MCF 10A (cell line): ENCODE measurements at regions of chr13 and their contacts with region 1.

Region 1: DNA sequence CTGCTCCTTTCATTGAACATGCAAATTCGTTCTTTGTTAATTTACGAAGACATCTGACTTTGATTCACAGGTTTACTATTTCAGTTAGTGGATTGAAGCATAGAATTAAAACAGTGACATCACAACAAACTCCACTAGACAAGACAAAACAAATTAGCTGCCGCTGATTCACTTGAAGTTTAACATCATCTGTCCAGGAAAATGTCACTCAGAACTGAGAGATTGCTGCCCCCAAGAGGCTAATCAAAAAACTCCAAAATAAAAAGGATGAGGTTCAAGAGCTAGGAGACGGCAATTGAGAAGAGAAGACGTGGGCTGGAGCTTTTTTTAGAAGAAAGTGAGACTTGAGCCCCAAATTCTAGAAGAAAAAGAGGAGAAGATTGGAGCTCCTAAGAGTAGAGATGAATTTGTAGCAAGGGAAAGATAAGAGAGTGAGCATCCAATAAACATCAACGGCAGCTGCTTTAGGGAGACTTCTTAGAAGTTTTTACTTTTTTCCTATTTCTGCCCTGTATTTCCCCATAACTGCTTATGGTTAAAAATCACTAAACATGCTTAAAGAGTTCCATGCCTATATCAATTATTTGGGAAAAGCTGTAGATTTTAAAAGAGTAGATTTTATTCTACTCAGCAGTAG is 40.8 kb upstream of the TPP2 start:
- DNase-seq: peak; percentile 75
- H3K4me3 Mint-ChIP-seq: no peak overlapping the region
- H3K27ac Mint-ChIP-seq: no peak overlapping the region
- H3K4me1 Mint-ChIP-seq: peaks cover 6% of the 10 kb centered on the region
- H3K27me3 Mint-ChIP-seq: no peaks in the 10 kb centered on the region
- CTCF ChIP-seq: peak; percentile 48

Region 2: GRCh38 chr13:101795025-101795424 is 761.0 kb before region 1 on chr13:
- CTCF ChIA-PET with region 1: no interaction called
- POLR2A ChIA-PET with region 1: no interaction called
- intact Hi-C with region 1: loop called (anchors 10 kb)
- DNase-seq: peak; percentile 9
- H3K4me3 Mint-ChIP-seq: no peak overlapping the region
- H3K27ac Mint-ChIP-seq: no peak overlapping the region
- H3K4me1 Mint-ChIP-seq: no peaks in the 10 kb centered on the region
- H3K27me3 Mint-ChIP-seq: peaks cover 80% of the 10 kb centered on the region
- CTCF ChIP-seq: no peak

Region 3: DNA sequence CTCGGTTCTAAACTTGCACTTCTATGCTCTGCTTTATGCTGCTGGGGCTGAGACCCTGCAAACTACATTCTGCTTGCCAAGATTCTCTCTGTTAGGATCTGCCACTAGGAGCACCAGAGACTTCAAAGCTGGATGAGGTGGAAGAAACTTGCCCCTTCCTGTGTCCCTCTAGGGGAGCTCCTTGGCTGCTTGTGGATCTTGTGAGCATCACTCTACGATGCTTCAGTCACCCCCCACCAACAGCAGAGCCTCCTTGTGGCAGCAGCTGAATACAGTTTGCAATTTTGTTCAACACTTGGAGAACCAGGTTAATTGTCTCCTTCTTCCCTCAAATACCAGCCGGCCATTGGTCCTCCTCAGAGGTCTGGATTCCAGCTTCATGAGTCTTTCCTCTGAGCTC is 464.8 kb before region 1 on chr13:
- CTCF ChIA-PET with region 1: interaction called, 21 read pairs
- POLR2A ChIA-PET with region 1: no interaction called
- intact Hi-C with region 1: loop called (anchors 5 kb)
- DNase-seq: peak; percentile 18
- H3K4me3 Mint-ChIP-seq: no peak overlapping the region
- H3K27ac Mint-ChIP-seq: no peak overlapping the region
- H3K4me1 Mint-ChIP-seq: peaks cover 8% of the 10 kb centered on the region
- H3K27me3 Mint-ChIP-seq: no peaks in the 10 kb centered on the region
- CTCF ChIP-seq: no peak

Region 4: GRCh38 chr13:102191951-102192471 is 364.0 kb before region 1 on chr13:
- CTCF ChIA-PET with region 1: interaction called, 24 read pairs
- POLR2A ChIA-PET with region 1: no interaction called
- intact Hi-C with region 1: loop called (anchors 1 kb)
- DNase-seq: peak; percentile 3
- H3K4me3 Mint-ChIP-seq: no peak overlapping the region
- H3K27ac Mint-ChIP-seq: no peak overlapping the region
- H3K4me1 Mint-ChIP-seq: peaks cover 25% of the 10 kb centered on the region
- H3K27me3 Mint-ChIP-seq: no peaks in the 10 kb centered on the region
- CTCF ChIP-seq: no peak

Region 5: DNA sequence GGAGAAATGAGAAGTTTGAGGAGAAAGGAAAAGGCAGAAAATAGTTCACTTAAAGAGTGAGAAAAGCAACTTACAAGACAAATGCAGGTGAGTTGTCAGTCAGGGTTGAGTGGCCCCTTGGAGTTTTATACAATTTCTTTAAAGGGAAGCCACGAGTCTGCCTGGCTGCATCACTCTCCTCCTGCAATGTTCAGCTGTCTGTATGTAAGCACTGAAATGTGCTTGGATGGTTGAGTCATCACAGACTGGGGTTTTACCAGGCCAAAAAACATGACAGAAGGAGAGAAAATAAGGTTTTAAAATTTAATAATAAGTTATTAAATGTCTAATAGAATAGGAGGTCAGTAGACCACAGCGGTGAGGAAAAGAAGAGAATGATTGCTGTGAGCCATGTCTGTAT is 103.2 kb before region 1 on chr13:
- CTCF ChIA-PET with region 1: interaction called, 18 read pairs
- POLR2A ChIA-PET with region 1: no interaction called
- intact Hi-C with region 1: loop called (anchors 1 kb)
- DNase-seq: no peak
- H3K4me3 Mint-ChIP-seq: no peak overlapping the region
- H3K27ac Mint-ChIP-seq: no peak overlapping the region
- H3K4me1 Mint-ChIP-seq: peaks cover 13% of the 10 kb centered on the region
- H3K27me3 Mint-ChIP-seq: no peaks in the 10 kb centered on the region
- CTCF ChIP-seq: no peak

Region 6: GRCh38 chr13:102609696-102610095 is 53.7 kb after region 1 on chr13:
- CTCF ChIA-PET with region 1: no interaction called
- POLR2A ChIA-PET with region 1: no interaction called
- intact Hi-C with region 1: no loop called
- DNase-seq: no peak
- H3K4me3 Mint-ChIP-seq: no peak overlapping the region
- H3K27ac Mint-ChIP-seq: no peak overlapping the region
- H3K4me1 Mint-ChIP-seq: peaks cover 11% of the 10 kb centered on the region
- H3K27me3 Mint-ChIP-seq: no peaks in the 10 kb centered on the region
- CTCF ChIP-seq: no peak